Mammary epithelial cell (primary cell): ENCODE measurements at regions of chr15 and their contacts with region 1.

Region 1: DNA sequence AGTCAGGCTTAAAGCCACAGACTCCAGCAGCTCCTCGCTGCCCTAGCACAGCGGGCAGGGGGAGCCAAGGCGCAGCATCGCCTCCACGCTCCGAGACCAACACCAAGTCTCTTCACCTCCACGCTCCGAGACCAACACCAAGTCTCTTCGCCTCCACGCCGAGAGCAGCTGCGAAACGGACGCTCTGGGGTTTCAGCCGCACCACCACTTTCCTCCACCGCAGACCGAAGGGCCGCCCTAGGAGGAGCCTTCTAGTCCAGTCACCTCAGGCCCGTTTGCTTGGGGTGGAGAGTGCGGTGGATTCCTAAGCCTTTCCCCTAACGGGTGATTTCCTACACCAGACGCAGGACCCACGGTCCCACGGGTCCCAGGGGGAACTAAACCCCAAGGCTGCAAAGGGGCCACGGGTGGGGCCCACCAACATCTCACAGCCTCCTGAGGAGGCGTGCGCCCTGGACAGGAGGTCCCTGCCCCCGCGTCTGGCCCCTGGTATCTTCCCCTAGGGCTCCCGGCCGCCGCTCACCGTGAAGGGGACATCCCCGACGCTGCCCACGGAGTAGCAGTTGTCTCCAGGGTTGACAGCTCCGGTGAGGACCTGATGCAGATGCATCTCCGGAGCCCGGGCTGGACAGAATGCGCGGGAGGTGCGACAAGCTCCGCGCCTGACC is 501 bp downstream of the DMXL2 start:
- DNase-seq: peak; percentile 68
- H3K4me3 ChIP-seq: peak overlapping the region; percentile 70 to 97 (median 88)
- H3K27ac ChIP-seq: peak overlapping the region; percentile 45
- H3K4me1 ChIP-seq: peaks cover 9% of the 10 kb centered on the region
- H3K27me3 ChIP-seq: no peaks in the 10 kb centered on the region
- CTCF ChIP-seq: peak in 1 of 2 donors; percentile 46

Region 2: GRCh38 chr15:51536965-51537574 is 85.0 kb before region 1 on chr15:
- CTCF ChIA-PET with region 1: no interaction called
- dilution Hi-C with region 1: no loop called
- in situ Hi-C with region 1: no loop called
- intact Hi-C with region 1: loop called (anchors 2 kb)
- DNase-seq: no peak
- H3K4me3 ChIP-seq: no peak overlapping the region
- H3K27ac ChIP-seq: no peak overlapping the region
- H3K4me1 ChIP-seq: no peaks in the 10 kb centered on the region
- H3K27me3 ChIP-seq: no peaks in the 10 kb centered on the region
- CTCF ChIP-seq: peak; percentile 67 to 78

Region 3: GRCh38 chr15:51585986-51586385 is 36.1 kb before region 1 on chr15:
- CTCF ChIA-PET with region 1: interaction called, 10 read pairs
- dilution Hi-C with region 1: no loop called
- in situ Hi-C with region 1: no loop called
- intact Hi-C with region 1: no loop called
- DNase-seq: no peak
- H3K4me3 ChIP-seq: no peak overlapping the region
- H3K27ac ChIP-seq: no peak overlapping the region
- H3K4me1 ChIP-seq: no peaks in the 10 kb centered on the region
- H3K27me3 ChIP-seq: no peaks in the 10 kb centered on the region
- CTCF ChIP-seq: no peak

Region 4: GRCh38 chr15:52179278-52180195 is 557.5 kb after region 1 on chr15:
- CTCF ChIA-PET with region 1: no interaction called
- dilution Hi-C with region 1: no loop called
- in situ Hi-C with region 1: no loop called
- intact Hi-C with region 1: no loop called
- DNase-seq: peak; percentile 85
- H3K4me3 ChIP-seq: peak overlapping the region; percentile 72 to 95 (median 95)
- H3K27ac ChIP-seq: peak overlapping the region; percentile 70
- H3K4me1 ChIP-seq: peaks cover 21% of the 10 kb centered on the region
- H3K27me3 ChIP-seq: no peaks in the 10 kb centered on the region
- CTCF ChIP-seq: no peak